Right ventricle myocardium superior (tissue), 1 donor: ENCODE measurements at regions of chr1 and their contacts with region 1.

Region 1: GRCh38 chr1:53485478-53486394 is 26.5 kb downstream of the DMRTB1 start:
- DNase-seq: peak; percentile 89
- ATAC-seq: peak; percentile 94

Region 2: GRCh38 chr1:53681977-53682685 is 196.4 kb after region 1 on chr1:
- intact Hi-C with region 1: loop called (anchors 2 kb)
- DNase-seq: peak; percentile 59
- ATAC-seq: no peak

Region 3: GRCh38 chr1:53754484-53755312 is 269.0 kb after region 1 on chr1:
- intact Hi-C with region 1: loop called (anchors 5 kb)
- DNase-seq: no peak
- ATAC-seq: no peak